Cardiac septum (tissue), 1 donor: ENCODE measurements at regions of chr15 and their contacts with region 1.

Region 1: DNA sequence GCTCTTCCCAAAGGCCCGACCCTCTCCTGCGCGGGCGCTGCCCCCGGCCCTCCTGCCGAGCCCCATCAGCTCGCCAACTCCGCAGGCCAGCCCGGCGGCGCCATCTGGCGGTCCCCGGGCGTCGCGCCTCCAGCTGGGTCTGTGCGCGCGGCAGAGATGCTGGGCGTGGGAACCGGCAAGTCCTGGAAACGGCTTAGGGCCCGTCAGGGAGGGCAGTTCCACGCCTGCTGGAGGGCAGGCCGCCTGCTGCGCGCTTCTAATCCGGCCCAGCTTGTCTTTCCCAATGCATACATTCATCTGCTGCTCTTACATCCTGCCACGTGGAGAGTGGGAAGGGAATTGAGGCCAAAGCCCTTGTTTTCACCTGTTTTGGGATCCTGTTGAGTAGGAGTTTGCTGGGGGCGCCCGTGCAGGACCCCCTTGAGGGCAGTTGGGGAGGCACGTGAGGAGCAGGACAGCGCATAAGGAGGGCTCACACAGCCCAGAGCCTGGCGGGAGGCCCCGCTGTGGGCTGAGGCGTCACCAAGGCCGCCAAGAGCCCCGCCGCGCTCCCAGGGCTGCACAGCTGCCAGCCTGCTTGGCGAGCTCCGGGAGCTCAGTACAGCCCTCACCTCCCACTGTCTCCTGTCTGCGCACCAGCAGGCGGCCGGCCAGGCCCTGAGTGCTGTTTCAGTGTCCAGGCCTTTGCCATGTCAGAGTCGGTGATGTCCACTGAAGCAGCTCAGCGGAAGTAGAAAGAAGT is 165.6 kb downstream of the NSMCE3 start:
- DNase-seq: no peak

Region 2: DNA sequence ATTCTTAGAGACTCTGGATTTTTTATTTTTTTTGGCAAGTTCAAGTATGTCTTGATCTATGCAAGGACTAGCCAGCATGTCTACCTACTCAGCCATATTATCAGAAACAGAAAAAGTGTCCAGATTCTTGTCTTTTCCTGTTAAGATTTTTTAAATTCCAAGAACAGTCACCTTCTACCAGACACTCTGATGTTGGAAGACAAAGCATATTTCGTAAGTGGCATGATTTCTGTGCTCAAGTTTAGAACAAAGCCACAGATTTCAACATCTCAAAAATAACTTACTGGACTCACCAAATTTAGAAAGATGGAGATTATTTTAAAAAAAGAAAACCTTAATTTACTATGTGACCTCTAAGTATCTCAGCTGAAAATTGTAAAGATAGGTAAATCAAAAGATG is 317.5 kb before region 1 on chr15:
- intact Hi-C with region 1: loop called (anchors 10 kb)
- DNase-seq: no peak